ENCODE measurements at regions of chr20 and their contacts with region 1.

Region 1: GRCh38 chr20:3204124-3204822 is at the start of gene DDRGK1:
- DNase-seq: peak; percentile 87 to 93
- ATAC-seq: peak; percentile 96 to 97 (median 96)
- H3K4me3 ChIP-seq: peak within 1 kb of the TSS; percentile 94
- H3K27ac ChIP-seq: peak within 1 kb of the TSS; percentile 91
- H3K4me1 ChIP-seq: peaks cover 11% of the 10 kb centered on the region
- H3K27me3 ChIP-seq: peaks cover 0 to 2% (median 0%) of the 10 kb centered on the region in 3 donors
- CTCF ChIP-seq: no peak
- total RNA-seq, gene DDRGK1: 36.6 to 49.7 (median 42.3) TPM

Region 2: DNA sequence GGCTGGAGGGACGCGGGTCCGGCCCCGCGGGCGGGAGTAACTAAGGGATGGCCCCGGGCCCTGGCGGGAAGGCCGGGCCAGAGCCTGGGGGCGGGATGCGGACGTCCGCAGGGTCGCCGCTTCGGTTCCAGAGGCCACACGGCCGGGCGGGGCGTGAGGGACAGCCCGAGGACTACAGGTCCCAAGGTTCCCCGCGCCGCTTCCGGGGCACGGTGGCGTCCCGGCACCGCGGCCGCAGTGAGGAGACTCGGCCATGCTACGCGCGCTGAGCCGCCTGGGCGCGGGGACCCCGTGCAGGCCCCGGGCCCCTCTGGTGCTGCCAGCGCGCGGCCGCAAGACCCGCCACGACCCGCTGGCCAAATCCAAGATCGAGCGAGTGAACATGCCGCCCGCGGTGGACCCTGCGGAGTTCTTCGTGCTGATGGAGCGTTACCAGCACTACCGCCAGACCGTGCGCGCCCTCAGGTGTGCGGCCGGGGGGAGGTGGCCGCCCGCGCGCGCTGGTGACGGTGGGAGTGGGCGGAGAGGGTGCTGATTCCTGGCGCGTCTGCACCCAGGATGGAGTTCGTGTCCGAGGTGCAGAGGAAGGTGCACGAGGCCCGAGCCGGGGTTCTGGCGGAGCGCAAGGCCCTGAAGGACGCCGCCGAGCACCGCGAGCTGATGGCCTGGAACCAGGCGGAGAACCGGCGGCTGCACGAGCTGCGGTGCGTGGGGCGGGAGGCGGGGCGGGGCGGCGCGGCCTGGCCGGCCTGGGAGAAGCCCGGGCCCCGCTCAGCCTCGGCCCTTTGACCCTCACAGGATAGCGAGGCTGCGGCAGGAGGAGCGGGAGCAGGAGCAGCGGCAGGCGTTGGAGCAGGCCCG is 158.2 kb before region 1 on chr20 and contains the start of gene MRPS26:
- intact Hi-C with region 1: loop called in 1 of 2 experiments (anchors 10 kb)
- DNase-seq: peak; percentile 94 to 95
- ATAC-seq: peak; percentile 95 to 96 (median 96)
- H3K4me3 ChIP-seq: peak within 1 kb of the TSS; percentile 98
- H3K27ac ChIP-seq: peak within 1 kb of the TSS; percentile 94
- H3K4me1 ChIP-seq: peaks cover 7% of the 10 kb centered on the region
- H3K27me3 ChIP-seq: no peaks in the 10 kb centered on the region
- CTCF ChIP-seq: no peak
- total RNA-seq, gene MRPS26: 42.8 to 49.0 (median 44.7) TPM

Region 3: DNA sequence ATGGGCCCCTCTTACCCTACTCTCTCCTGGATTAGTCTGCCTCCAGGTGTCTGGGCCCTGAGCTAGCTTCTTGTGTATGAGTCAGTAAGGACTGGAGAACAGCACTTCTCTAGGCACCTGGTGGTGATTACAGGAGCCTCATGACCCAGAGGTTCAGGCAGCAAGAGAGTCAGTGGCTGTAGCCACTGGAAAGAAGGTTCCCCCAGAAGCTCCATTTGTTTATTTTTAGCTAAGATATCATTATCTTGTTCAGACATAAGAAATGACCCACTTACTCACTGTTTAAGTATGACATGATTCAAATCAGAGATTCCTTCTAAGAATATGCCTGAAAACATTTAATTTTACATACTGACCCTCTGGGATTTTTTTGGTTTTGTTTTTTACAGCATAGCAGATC is 58.3 kb after region 1 on chr20:
- intact Hi-C with region 1: no loop called
- DNase-seq: no peak
- ATAC-seq: no peak
- H3K4me3 ChIP-seq: no peak overlapping the region
- H3K27ac ChIP-seq: no peak overlapping the region
- H3K4me1 ChIP-seq: no peaks in the 10 kb centered on the region
- H3K27me3 ChIP-seq: no peaks in the 10 kb centered on the region
- CTCF ChIP-seq: no peak

Measured in psoas muscle (tissue), 8 donors.